Mammary epithelial cell (primary cell): ENCODE measurements at regions of chr17 and their contacts with region 1.

Region 1: DNA sequence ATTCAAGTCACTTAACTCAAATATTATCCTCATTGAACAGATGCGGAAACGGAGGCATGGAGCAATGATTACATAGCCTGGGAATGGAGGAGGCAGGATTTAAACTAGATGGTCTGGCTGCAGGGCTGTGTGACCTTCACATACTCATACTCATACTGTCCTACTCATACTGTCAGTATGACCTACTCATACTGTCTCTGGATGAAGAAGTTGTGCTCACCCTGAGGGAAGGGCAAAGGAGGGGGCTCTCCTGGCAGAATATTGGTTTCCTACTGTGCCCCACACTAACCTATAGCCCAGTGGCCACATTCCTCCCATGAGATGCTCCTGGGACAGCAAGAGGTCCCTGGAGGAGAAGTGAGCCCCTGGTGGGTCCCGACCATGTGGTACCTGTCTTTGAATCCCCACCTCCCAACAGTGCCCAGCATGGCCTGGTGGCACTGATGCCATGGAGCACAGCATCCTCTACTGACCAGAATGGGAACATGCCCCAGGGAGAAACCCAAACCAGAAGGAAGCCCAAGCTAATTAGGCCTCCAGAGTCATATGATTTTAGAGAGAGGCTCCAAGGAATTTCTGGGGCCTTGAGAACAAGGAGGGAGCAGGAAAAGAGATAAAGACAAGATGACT is 197.3 kb upstream of the SDK2 start:
- DNase-seq: no peak
- H3K4me3 ChIP-seq: no peak overlapping the region
- H3K27ac ChIP-seq: no peak overlapping the region
- H3K4me1 ChIP-seq: no peaks in the 10 kb centered on the region
- H3K27me3 ChIP-seq: no peaks in the 10 kb centered on the region
- CTCF ChIP-seq: peak; percentile 45 to 78

Region 2: DNA sequence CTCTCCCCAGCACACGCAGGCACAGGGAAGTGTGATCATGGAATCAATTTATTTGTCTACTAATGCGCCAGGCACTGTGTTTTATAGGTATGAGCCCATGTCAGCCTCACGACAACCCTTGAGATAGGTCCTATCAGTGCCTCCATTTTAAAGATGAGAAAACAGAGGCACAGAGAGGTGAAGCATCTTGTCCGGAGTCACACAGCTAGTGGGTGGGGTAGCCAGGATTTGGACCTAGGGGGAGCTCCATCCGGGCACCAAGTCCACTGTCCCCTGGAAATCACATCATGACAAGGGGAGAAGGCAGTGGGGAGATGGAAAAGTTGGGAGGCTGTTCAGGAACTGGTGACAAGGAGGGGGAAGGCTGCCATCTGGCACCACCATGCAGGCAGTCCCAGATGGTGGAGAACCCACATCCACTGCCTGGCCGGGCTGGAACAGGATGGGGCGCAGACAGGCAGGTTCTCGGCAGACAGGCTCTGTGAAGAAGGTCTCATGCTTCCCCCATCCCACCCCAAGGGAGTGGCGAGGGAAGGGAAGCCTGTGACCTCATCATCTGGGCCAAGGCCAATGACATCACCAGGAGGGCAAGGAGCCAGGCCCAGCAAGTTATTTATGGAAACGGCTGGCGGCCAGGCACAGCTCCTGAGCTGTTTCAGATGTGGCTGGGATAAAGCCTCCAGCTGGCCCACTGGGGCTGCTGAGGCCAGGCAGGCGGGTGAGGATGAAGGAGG is 71.3 kb before region 1 on chr17:
- CTCF ChIA-PET with region 1: no interaction called
- dilution Hi-C with region 1: loop called (anchors 5 kb)
- in situ Hi-C with region 1: no loop called
- intact Hi-C with region 1: no loop called
- DNase-seq: peak; percentile 71
- H3K4me3 ChIP-seq: no peak overlapping the region
- H3K27ac ChIP-seq: no peak overlapping the region
- H3K4me1 ChIP-seq: peaks cover 3% of the 10 kb centered on the region
- H3K27me3 ChIP-seq: peaks cover 11% of the 10 kb centered on the region
- CTCF ChIP-seq: no peak

Region 3: DNA sequence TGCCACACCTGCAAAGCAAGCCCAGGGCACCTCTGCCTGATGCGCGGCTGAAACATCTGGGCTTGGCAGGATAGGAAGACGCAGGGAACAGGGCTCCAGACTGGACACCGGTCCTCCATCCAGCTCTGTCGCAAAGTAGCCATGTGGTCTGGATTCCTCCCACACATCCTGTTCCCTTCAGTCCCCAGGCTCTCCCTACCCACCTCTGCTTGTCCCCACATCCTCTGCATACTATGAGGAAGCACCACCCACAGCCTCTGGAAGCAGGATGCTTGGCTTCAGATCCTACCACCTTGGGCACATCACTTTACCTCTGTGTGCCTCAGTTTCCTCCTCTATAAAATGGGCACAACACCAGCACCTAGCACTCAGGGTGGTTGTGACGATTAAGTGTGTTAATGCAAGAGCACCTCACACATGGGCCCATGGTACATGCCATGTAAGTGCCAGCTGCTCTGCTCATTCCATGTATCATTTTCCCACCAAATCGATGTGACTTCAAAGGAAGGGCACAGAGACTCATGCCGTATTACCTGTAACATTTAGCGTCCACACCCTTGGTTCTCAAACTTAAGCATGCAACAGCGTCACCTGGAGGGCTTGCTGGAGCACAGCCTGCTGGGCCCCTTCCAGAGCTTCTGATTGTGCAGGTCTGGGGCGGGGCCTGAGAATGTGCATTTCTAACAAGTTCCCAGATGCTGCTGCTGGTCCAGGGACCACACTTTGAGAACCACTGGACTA is 58.7 kb before region 1 on chr17:
- CTCF ChIA-PET with region 1: no interaction called
- dilution Hi-C with region 1: no loop called
- in situ Hi-C with region 1: no loop called
- intact Hi-C with region 1: no loop called
- DNase-seq: no peak
- H3K4me3 ChIP-seq: no peak overlapping the region
- H3K27ac ChIP-seq: no peak overlapping the region
- H3K4me1 ChIP-seq: no peaks in the 10 kb centered on the region
- H3K27me3 ChIP-seq: peaks cover 4% of the 10 kb centered on the region
- CTCF ChIP-seq: peak in 1 of 2 donors; percentile 2

Region 4: DNA sequence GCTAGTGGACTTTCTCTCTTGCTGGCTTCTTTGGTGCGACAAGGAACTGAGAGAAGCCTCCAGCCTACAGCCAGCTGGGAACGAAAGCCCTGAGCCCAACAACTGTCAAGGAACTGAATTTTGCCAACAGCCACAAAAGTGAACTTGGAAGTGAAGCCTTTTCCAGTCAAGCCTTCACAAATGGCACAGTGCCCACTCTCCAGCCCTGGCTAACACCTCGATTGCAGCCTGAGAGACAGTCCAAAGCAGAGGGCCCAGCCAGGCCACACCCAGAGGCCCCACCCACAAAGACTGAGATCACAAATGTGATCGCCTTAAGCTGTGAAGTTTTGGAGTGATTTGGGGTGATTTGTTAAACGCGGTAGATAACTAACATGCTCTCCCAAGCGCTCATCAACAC is 47.3 kb after region 1 on chr17:
- CTCF ChIA-PET with region 1: no interaction called
- dilution Hi-C with region 1: loop called (anchors 5 kb)
- in situ Hi-C with region 1: no loop called
- intact Hi-C with region 1: no loop called
- DNase-seq: no peak
- H3K4me3 ChIP-seq: no peak overlapping the region
- H3K27ac ChIP-seq: no peak overlapping the region
- H3K4me1 ChIP-seq: no peaks in the 10 kb centered on the region
- H3K27me3 ChIP-seq: no peaks in the 10 kb centered on the region
- CTCF ChIP-seq: no peak

Region 5: GRCh38 chr17:73901661-73902415 is 60.3 kb after region 1 on chr17:
- CTCF ChIA-PET with region 1: no interaction called
- dilution Hi-C with region 1: no loop called
- in situ Hi-C with region 1: no loop called
- intact Hi-C with region 1: no loop called
- DNase-seq: peak; percentile 3
- H3K4me3 ChIP-seq: no peak overlapping the region
- H3K27ac ChIP-seq: no peak overlapping the region
- H3K4me1 ChIP-seq: no peaks in the 10 kb centered on the region
- H3K27me3 ChIP-seq: peaks cover 4% of the 10 kb centered on the region
- CTCF ChIP-seq: no peak